ENCODE measurements at regions of chr3 and their contacts with region 1.

Region 1: DNA sequence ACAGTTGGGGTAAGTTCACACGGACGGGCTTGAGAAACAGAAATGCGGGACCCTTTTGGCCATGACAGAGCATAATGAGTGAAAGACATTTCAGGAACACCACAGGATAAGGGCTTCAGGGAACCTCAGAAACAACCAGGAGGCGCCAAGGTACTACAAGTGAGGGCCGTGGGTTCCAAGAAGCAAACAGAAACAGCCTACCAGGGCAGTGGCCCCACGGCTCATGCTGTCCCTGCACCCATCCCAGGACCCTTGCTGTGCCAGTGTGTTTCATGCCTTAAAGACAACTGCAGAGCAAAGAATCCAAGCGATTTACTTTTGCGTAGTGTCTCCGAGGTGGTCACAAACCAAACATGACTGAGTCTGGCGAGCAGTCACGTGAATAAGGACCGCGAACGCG is 54.0 kb downstream of the RUBCN start:
- DNase-seq: peak in 2 of 9 donors; percentile 7 to 8
- ATAC-seq: no peak
- H3K4me3 ChIP-seq: no peak overlapping the region
- H3K4me3 Mint-ChIP-seq: no peak overlapping the region
- H3K27ac ChIP-seq: no peak overlapping the region
- H3K27ac Mint-ChIP-seq: peak overlapping the region in 1 of 9 donors; percentile 87
- H3K4me1 ChIP-seq: no peaks in the 10 kb centered on the region
- H3K4me1 Mint-ChIP-seq: no peaks in the 10 kb centered on the region
- H3K27me3 ChIP-seq: no peaks in the 10 kb centered on the region
- H3K27me3 Mint-ChIP-seq: no peaks in the 10 kb centered on the region

Region 2: GRCh38 chr3:197801891-197802778 is 119.4 kb after region 1 on chr3:
- CTCF ChIA-PET with region 1: no interaction called
- POLR2A ChIA-PET with region 1: no interaction called
- intact Hi-C with region 1: loop called in 1 of 2 experiments (anchors 1 kb)
- DNase-seq: peak in 5 of 9 donors; percentile 30 to 39 (median 34)
- ATAC-seq: peak; percentile 78
- H3K4me3 ChIP-seq: no peak overlapping the region
- H3K4me3 Mint-ChIP-seq: peak overlapping the region in 7 of 10 donors; percentile 12 to 35 (median 19)
- H3K27ac ChIP-seq: no peak overlapping the region
- H3K27ac Mint-ChIP-seq: peak overlapping the region; percentile 44 to 81 (median 57)
- H3K4me1 ChIP-seq: peaks cover 13 to 21% of the 10 kb centered on the region in 2 donors
- H3K4me1 Mint-ChIP-seq: peaks cover 35 to 59% (median 53%) of the 10 kb centered on the region in 7 donors
- H3K27me3 ChIP-seq: no peaks in the 10 kb centered on the region
- H3K27me3 Mint-ChIP-seq: no peaks in the 10 kb centered on the region

Region 3: DNA sequence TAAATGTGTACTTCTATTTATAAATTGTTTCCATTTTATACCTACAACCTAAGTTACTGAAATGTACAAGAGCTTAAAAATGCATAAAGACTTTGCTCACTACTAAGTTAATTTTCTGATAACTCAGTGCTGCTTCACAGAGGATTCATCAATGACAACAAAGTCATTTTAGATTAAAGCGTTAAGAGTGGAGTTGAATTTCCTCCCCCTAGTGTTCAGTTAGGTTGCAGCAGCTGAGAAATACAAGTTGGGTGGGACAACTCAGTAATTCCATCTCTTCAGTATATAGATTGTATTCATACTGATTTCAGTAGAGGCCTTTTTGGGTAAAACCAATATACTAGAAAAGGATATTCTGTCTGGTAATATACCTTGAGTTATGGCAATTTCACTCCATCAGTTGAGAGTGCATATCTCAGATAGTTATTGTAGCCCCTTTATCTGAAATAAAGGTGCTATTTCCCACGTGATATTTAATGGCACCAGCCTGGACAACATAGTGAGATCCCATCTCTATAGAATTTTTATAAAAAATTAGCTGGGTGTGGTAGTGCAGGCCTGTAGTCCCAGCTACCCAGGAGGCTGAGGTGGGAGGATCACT is 260.3 kb after region 1 on chr3:
- CTCF ChIA-PET with region 1: no interaction called
- POLR2A ChIA-PET with region 1: no interaction called
- intact Hi-C with region 1: loop called in 1 of 2 experiments (anchors 2 kb)
- DNase-seq: peak in 7 of 9 donors; percentile 24 to 63 (median 48)
- ATAC-seq: peak; percentile 82
- H3K4me3 ChIP-seq: no peak overlapping the region
- H3K4me3 Mint-ChIP-seq: no peak overlapping the region
- H3K27ac ChIP-seq: no peak overlapping the region
- H3K27ac Mint-ChIP-seq: no peak overlapping the region
- H3K4me1 ChIP-seq: no peaks in the 10 kb centered on the region
- H3K4me1 Mint-ChIP-seq: peaks cover 0 to 8% (median 0%) of the 10 kb centered on the region in 7 donors
- H3K27me3 ChIP-seq: no peaks in the 10 kb centered on the region
- H3K27me3 Mint-ChIP-seq: peaks cover 0 to 2% (median 0%) of the 10 kb centered on the region in 5 donors

Measured in naive thymus-derived CD4-positive, alpha-beta T cell (primary cell).